A549 (cell line): ENCODE measurements at regions of chr1 and their contacts with region 1.

Region 1: DNA sequence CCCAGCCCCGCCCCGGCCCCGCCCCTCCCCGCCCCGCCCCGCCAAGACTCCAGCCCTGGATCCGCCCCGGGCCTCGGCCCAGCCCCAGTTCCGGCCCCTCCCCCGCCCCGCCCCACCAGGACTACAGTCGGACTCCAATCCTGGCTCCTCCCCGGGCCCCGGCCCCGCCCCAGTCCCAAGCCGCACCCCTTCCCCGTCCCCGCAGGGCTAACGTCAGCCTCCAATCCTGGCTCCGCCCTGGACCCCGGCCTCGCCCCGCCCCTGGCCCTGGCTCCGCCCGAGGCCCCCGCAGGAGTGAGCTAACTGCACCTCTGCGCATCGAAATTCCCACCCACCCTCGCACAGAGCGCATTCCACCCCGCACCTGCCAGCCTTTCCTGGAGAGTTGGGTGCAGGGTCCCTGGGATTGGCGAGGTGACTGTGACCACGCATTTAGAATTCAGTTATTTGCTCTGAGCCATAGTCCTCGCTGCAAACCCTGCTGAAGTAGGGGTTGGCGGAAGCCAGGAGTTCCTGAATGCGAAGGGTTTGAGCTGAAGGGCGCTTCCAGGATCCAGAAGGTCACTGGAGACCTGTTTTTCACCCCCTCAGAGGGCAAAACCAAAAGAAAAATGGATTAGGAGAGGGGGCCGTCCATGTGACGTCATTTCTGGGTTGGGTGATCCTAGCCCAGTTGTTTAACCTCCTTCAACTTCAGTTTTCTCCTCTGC is 588 bp upstream of the IGSF8 start:
- DNase-seq: peak; percentile 92
- ATAC-seq: peak; percentile 80 to 89
- H3K4me3 ChIP-seq: peak overlapping the region; percentile 83
- H3K27ac ChIP-seq: peak overlapping the region; percentile 74 to 82
- H3K4me1 ChIP-seq: peaks cover 37% of the 10 kb centered on the region
- CTCF ChIP-seq: no peak
- EP300 ChIP-seq: no peak
- POLR2A ChIP-seq: peak; percentile 17; the same call in 1 of the 2 replicates
- RAD21 ChIP-seq: no peak

Region 2: DNA sequence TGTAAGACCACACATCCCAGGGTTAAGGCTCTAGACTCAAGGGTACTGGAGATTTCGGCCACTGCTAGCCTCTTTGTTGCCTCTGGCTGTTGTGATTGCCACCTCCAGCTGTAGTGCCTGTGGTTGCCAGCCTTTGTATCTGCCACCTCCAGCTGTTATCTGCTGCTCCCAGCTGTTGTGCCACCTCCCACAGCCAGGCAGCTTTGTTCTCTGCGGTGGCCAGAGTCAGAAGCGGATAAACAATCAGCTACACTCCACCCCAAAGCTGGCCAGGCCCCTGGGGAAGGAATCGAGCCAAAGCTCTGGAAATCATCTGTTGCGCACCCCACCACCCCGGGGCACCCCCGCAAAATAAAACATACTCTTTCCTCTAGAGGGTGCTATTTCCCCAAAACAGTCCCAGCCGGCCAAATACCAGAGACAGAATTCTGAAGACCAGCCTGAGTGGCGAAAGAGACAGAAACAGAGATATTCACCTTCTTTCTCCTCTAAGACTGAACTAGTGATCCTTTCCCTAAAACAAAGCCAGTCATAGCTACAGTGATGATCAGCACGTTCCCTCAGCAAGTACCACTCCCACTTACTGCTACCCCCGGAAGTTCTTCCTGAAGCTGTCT is 52.4 kb before region 1 on chr1:
- CTCF ChIA-PET with region 1: interaction called, 11 read pairs
- POLR2A ChIA-PET with region 1: no interaction called
- DNase-seq: peak; percentile 26 to 75
- ATAC-seq: peak; percentile 73 to 91
- H3K4me3 ChIP-seq: 0 out of 3 replicates have a peak overlapping the region, but pooled peaks have one; percentile 17
- H3K27ac ChIP-seq: no peak overlapping the region
- H3K4me1 ChIP-seq: peaks cover 8% of the 10 kb centered on the region; the same call in 2 of the 3 replicates
- CTCF ChIP-seq: peak; percentile 72
- EP300 ChIP-seq: no peak
- POLR2A ChIP-seq: no peak
- RAD21 ChIP-seq: peak; percentile 67 to 71

Region 3: GRCh38 chr1:160108888-160109662 is 10.1 kb after region 1 on chr1:
- CTCF ChIA-PET with region 1: interaction called, 222 read pairs
- POLR2A ChIA-PET with region 1: no interaction called
- DNase-seq: peak; percentile 75 to 80
- ATAC-seq: peak; percentile 40 to 68; a peak in 4 of 6 replicates
- H3K4me3 ChIP-seq: no peak overlapping the region
- H3K27ac ChIP-seq: peak overlapping the region; percentile 77 to 83
- H3K4me1 ChIP-seq: peaks cover 20% of the 10 kb centered on the region
- CTCF ChIP-seq: peak; percentile 57
- EP300 ChIP-seq: peak in 1 of 2 experiments; percentile 34; a peak in 1 of 5 replicates
- POLR2A ChIP-seq: no peak
- RAD21 ChIP-seq: peak; percentile 27 to 35; a peak in 3 of 5 replicates

Region 4: DNA sequence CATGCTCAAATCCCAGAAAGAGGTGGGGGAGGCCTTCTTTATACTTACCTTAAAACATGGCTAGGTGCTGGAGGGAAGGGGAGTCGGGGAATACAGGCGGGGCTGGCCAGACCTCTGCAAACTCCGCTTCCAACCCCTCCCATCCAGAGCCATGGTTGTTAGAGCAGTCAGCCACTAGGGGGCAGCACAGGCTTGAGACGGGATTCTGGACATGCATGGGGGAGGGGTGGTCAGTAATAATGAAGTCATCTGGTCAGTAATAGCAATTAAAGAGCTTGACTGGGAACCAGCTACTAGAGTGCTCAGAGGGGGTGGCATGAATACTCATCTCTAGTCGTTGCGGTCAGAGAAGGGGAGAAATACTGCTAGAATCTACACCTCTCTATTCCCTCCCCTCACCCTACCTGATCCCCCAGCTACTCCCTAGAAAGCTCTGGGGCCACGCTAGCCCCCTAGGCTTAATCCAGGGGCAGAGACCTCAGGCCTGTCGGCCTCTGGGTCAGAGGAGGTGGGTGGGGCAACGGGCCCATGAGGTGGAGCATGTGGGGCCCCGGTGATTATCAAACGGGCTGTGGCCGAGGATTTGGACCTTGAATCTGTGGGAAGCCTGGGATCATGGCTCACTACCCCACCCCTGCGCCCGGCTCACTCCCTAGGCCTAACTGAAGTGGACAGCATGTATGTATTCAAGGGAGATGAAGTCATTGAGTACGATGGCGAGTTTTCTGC is 94.2 kb after region 1 on chr1:
- CTCF ChIA-PET with region 1: interaction called, 86 read pairs
- POLR2A ChIA-PET with region 1: interaction called, 3 read pairs
- DNase-seq: peak; percentile 68 to 78
- ATAC-seq: peak; percentile 75 to 89
- H3K4me3 ChIP-seq: no peak overlapping the region
- H3K27ac ChIP-seq: peak overlapping the region; percentile 43 to 61; a peak in 5 of 6 replicates
- H3K4me1 ChIP-seq: peaks cover 18% of the 10 kb centered on the region
- CTCF ChIP-seq: peak; percentile 92
- EP300 ChIP-seq: no peak
- POLR2A ChIP-seq: no peak
- RAD21 ChIP-seq: peak; percentile 92 to 95

Region 5: DNA sequence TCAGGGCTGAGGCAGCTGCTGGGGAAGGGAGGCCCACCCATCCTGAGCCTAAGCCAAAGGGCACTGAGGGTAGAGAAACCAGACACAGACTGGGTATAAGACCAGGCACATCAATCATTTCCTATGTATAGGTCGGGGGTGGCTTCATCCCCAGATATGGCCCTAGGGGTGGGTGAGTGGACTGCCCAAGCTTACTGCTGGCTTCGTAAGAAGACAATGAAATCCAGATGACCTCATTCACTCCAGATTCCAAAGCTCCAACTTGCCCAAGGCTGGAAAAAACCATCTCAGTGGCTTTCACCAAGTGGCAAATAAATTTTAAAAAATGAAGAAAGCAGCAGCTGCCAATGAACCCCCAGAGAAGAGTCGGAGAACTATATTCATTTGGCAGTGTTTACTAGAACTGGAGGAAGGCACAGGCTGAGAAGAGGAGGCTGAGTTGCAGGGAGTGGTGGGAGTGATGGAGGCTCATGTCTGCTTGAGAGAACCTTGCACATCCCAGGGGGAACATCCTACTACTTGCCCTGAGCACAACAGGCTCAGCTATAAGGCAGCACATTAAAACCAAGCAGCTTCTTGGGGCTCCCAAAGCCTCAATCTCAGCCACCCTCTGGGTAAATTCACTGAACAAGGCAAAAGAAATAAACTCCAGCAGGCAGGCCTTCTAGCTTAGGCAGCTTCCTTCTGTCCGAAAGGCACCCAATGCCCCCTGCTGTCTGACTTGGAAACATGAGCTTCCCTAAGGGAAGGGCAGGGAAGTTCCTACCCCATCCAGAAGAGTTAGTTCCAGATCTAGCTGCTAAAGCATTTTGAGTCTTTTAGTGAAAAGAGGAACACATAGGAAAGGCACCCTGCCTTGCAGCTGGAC is 120.3 kb after region 1 on chr1:
- CTCF ChIA-PET with region 1: interaction called, 128 read pairs
- POLR2A ChIA-PET with region 1: interaction called, 4 read pairs
- DNase-seq: peak; percentile 55 to 70
- ATAC-seq: peak; percentile 87 to 88
- H3K4me3 ChIP-seq: no peak overlapping the region
- H3K27ac ChIP-seq: 0 out of 6 replicates have a peak overlapping the region, but pooled peaks of 1 of the 2 experiments have one; percentile 5
- H3K4me1 ChIP-seq: peaks cover 19% of the 10 kb centered on the region; the same call in 2 of the 3 replicates
- CTCF ChIP-seq: peak; percentile 61
- EP300 ChIP-seq: no peak
- POLR2A ChIP-seq: no peak
- RAD21 ChIP-seq: peak; percentile 72 to 74

Region 6: DNA sequence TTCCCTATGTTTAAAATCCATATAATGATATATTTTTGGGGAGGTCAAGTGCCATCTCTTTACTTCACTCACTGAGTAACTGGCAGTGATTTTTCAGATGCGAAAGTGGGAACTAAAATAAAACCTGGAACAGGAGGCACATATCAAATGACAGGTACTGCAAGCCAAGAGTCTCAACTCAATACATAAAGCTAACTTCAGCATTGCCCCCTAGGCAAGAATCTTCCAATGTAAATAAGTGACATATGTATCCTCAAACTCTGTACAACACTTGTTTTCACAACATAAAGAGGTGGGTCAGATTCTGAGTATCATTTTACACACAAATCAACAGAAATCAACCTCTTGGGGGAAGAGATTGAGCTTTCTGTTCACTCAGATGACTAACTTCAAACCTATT is 145.2 kb after region 1 on chr1:
- CTCF ChIA-PET with region 1: interaction called, 203 read pairs
- POLR2A ChIA-PET with region 1: no interaction called
- DNase-seq: no peak
- ATAC-seq: no peak
- H3K4me3 ChIP-seq: no peak overlapping the region
- H3K27ac ChIP-seq: no peak overlapping the region
- H3K4me1 ChIP-seq: peaks cover 16% of the 10 kb centered on the region
- CTCF ChIP-seq: no peak
- EP300 ChIP-seq: no peak
- POLR2A ChIP-seq: no peak
- RAD21 ChIP-seq: no peak

Region 7: GRCh38 chr1:160376525-160377131 is 277.6 kb after region 1 on chr1:
- CTCF ChIA-PET with region 1: interaction called, 60 read pairs
- POLR2A ChIA-PET with region 1: no interaction called
- DNase-seq: peak; percentile 65 to 76
- ATAC-seq: peak; percentile 80 to 93
- H3K4me3 ChIP-seq: no peak overlapping the region
- H3K27ac ChIP-seq: no peak overlapping the region
- H3K4me1 ChIP-seq: no peaks in the 10 kb centered on the region
- CTCF ChIP-seq: peak; percentile 96
- EP300 ChIP-seq: no peak
- POLR2A ChIP-seq: no peak
- RAD21 ChIP-seq: peak; percentile 84 to 94